ENCODE measurements at regions of chr13 and their contacts with region 1.

Region 1: DNA sequence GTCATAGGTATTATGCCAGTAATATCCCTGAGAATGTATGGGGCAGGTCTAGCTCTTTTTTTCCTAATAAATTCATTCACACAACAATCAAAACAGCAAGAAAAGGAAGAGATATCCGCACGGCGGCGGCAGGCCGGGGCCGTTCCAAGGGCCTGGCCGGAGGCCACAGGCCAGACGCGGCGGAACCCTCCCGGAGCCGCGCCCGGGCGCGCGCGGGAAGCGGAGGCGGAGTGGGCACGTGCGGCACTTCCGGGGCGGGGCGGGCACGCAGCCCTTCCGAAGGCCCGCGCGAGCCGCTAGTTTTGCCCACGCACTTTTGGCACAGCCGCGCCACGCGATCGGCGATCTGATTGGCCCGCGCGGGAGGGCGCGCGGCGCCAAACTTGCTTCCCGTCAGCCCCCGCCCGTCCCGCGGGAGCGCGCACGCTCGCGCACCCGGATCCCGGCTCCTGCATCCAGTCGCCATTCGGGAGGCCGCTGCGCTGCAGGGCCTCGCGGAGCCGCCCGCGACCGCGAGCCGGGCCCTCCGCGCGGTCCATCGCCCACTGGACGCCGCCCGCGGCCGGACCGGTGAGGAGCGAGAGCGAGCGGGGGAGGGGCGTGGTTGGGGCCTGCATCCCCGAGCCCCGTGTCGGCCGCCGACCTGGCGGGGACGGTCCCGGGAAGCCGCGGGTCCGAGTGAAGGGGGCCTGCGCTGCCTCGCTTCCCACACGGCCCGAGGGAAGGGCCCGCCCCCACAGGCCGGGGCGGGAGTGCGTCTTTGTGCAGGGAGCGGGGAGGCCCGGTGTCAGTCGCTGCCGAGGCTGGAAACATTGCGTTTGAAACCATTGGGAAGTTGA is at the start of gene CHAMP1:
- DNase-seq: peak; percentile 73
- ATAC-seq: peak; percentile 83
- H3K4me3 ChIP-seq: peak within 1 kb of the TSS; percentile 78
- H3K27ac ChIP-seq: peak within 1 kb of the TSS; percentile 73
- H3K4me1 ChIP-seq: peaks cover 5% of the 10 kb centered on the region; the same call in 1 of the 2 replicates
- H3K27me3 ChIP-seq: no peaks in the 10 kb centered on the region
- CTCF ChIP-seq: peak in 1 of 3 experiments; percentile 12; a peak in 1 of 6 replicates
- EP300 ChIP-seq: peak; percentile 14 to 41; a peak in 1 of 4 replicates
- POLR2A ChIP-seq: peak; percentile 91
- RAD21 ChIP-seq: no peak
- polyA plus RNA-seq, gene CHAMP1: 1.1 to 2.8 TPM

Region 2: DNA sequence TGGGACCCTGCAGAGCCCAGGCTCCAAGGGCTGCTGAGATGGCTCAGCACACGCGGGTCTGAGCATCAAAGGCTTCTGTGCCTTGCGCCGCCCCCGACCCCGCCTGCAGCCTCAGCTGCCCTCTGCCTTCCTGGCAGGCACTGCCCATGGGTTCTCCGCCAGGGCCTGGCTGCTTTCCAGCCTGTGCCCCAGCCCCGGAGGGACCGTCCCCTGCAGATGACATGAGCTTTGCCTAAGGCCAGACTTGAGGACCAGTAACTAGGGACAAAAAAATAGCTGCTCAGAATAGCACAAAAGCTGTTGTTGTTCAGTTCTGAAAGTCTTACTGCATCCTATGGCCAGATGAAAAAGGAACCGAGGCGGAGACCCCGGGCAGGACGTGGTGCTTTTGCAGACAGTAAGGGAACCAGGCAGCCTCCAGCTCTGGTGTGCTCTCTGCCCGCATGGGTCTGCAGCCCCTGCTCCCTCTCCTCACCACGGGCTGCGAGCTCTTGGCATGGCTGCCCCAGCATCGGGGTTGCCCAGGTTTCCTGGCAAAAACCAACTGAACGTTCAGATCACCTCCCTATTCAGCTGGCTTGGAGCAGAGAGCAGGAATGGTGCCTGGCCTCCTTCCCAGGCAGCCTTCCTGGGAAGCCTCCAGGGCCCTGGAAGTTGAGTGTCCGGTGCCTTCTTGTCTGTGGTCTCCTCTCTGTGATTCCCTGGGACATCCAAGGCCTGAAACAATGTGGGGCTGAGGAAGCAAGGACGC is 147.7 kb before region 1 on chr13:
- CTCF ChIA-PET with region 1: no interaction called
- POLR2A ChIA-PET with region 1: no interaction called
- RAD21 ChIA-PET with region 1: no interaction called
- SMC1A ChIA-PET with region 1: no interaction called
- in situ Hi-C with region 1: no loop called
- intact Hi-C with region 1: no loop called
- DNase-seq: no peak
- ATAC-seq: no peak
- H3K4me3 ChIP-seq: no peak overlapping the region
- H3K27ac ChIP-seq: no peak overlapping the region
- H3K4me1 ChIP-seq: peaks cover 6% of the 10 kb centered on the region; the same call in 1 of the 2 replicates
- H3K27me3 ChIP-seq: peaks cover 0 to 7% of the 10 kb centered on the region in 2 experiments; a peak in 2 of 4 replicates
- CTCF ChIP-seq: no peak
- EP300 ChIP-seq: no peak
- POLR2A ChIP-seq: no peak
- RAD21 ChIP-seq: no peak

Region 3: DNA sequence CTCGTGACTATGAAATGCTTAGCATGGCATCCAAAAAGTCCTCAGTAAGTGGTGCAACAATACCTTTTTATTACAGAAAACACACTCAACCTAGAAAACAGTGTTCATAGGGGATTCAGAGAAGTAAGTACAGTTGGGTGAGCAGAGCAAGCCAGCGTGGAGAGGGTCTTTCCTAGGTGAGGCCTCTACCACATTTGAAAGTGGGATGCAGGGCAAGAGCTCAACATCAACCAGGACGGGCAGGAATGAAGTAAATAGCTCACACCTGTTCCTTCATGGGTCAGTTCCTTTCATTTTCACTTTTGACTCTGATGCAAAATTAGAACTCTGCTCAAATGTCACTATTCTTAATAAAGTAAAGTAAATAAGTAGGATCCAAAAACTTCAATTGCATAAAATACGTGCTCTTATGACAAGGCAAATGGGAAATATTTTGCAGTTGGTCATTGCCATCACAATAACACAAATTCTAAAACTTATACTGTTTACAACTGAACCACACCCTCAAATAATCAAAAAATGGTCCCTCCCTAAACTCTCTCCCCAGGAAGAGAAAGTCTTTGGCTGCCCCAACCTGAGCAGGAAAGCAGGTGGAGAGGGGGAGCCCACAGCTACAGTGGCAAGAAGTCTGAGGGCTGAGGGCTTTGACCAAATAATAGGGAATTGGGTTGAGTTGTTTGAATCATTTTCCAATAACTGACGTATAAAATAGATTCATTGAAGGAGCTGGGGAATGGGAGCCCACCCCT is 20.2 kb after region 1 on chr13:
- CTCF ChIA-PET with region 1: interaction called, 9 read pairs
- POLR2A ChIA-PET with region 1: interaction called, 19 read pairs
- RAD21 ChIA-PET with region 1: interaction called, 10 read pairs
- SMC1A ChIA-PET with region 1: interaction called, 43 read pairs
- in situ Hi-C with region 1: no loop called
- intact Hi-C with region 1: loop called (anchors 1 kb)
- DNase-seq: no peak
- ATAC-seq: peak; percentile 81
- H3K4me3 ChIP-seq: no peak overlapping the region; the same call in 1 of the 2 replicates
- H3K27ac ChIP-seq: peak overlapping the region; percentile 49
- H3K4me1 ChIP-seq: peaks cover 10% of the 10 kb centered on the region
- H3K27me3 ChIP-seq: no peaks in the 10 kb centered on the region
- CTCF ChIP-seq: no peak
- EP300 ChIP-seq: no peak
- POLR2A ChIP-seq: no peak
- RAD21 ChIP-seq: no peak